PC-3 (cell line): ENCODE measurements at regions of chr9 and their contacts with region 1.

Region 1: DNA sequence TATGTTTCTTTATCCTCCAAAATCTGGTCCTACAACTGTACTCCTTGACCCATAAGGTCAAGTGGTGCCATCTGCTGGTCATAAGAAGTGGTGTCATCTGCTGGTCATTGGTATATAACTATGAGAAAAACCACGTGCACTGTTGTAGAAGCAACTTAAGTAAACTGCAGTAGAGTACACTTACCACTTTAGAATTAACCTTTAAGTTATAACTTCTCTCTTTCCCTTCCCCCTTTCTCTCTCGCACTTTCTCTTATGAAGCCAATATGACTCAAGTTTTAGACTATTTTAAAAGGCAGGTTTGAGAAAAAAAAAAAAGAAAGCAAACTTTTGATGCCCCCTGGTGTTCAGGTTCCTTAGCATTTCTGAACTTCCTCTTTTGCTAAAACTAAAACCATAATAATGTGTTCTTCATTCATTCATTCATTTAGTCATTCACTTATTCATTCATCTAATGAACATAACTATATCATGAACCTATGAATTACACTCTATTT is 12.8 kb upstream of the MTAP start:
- DNase-seq: peak; percentile 88
- ATAC-seq: peak; percentile 89
- H3K4me3 ChIP-seq: peak overlapping the region; percentile 57
- H3K27ac ChIP-seq: peak overlapping the region; percentile 57
- H3K4me1 ChIP-seq: peaks cover 18% of the 10 kb centered on the region
- H3K27me3 ChIP-seq: no peaks in the 10 kb centered on the region
- CTCF ChIP-seq: peak; percentile 86

Region 2: GRCh38 chr9:21326526-21327139 is 463.0 kb before region 1 on chr9:
- CTCF ChIA-PET with region 1: no interaction called
- POLR2A ChIA-PET with region 1: no interaction called
- intact Hi-C with region 1: loop called (anchors 1 kb)
- DNase-seq: peak; percentile 63
- ATAC-seq: peak; percentile 72
- H3K4me3 ChIP-seq: no peak overlapping the region
- H3K27ac ChIP-seq: no peak overlapping the region
- H3K4me1 ChIP-seq: peaks cover 10% of the 10 kb centered on the region
- H3K27me3 ChIP-seq: no peaks in the 10 kb centered on the region
- CTCF ChIP-seq: peak; percentile 76

Region 3: DNA sequence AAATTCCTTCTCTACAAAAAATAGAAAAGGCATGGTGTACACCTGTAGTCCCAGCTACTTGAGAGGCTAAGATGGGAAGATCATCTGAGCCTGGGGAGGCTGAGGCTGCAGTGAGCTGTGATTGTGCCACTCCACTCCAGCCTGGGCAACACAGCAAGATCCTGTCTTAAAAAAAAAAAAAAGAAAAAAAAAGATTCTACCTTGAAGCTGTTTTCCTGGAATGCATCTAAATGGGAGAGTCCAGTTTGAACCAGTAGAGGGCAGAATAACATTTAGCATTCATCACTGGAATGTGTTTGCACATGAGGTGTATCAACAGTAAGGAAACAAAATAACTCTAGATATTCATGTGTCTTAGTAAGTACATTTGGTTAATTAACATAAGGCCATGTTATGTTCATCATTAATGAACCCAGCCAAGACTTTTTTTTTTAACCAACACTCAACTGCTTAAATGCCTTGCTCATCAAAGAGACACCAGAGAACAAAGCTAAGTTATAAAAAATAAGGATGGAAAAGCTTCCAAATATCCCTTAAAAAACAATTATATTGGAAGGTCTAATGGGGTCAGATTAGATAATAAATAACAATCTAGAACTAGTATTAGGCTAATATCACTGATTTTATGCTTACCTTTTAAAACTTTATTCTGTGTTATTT is 323.6 kb before region 1 on chr9:
- CTCF ChIA-PET with region 1: no interaction called
- POLR2A ChIA-PET with region 1: no interaction called
- intact Hi-C with region 1: loop called (anchors 2 kb)
- DNase-seq: peak; percentile 77
- ATAC-seq: peak; percentile 48; the same call in 1 of the 2 replicates
- H3K4me3 ChIP-seq: no peak overlapping the region
- H3K27ac ChIP-seq: no peak overlapping the region
- H3K4me1 ChIP-seq: no peaks in the 10 kb centered on the region
- H3K27me3 ChIP-seq: no peaks in the 10 kb centered on the region
- CTCF ChIP-seq: peak; percentile 79

Region 4: GRCh38 chr9:21585756-21586752 is 203.5 kb before region 1 on chr9:
- CTCF ChIA-PET with region 1: no interaction called
- POLR2A ChIA-PET with region 1: no interaction called
- intact Hi-C with region 1: loop called (anchors 1 kb)
- DNase-seq: peak; percentile 39
- ATAC-seq: peak; percentile 31
- H3K4me3 ChIP-seq: no peak overlapping the region
- H3K27ac ChIP-seq: peak overlapping the region; percentile 39
- H3K4me1 ChIP-seq: peaks cover 46% of the 10 kb centered on the region
- H3K27me3 ChIP-seq: no peaks in the 10 kb centered on the region
- CTCF ChIP-seq: peak; percentile 53

Region 5: DNA sequence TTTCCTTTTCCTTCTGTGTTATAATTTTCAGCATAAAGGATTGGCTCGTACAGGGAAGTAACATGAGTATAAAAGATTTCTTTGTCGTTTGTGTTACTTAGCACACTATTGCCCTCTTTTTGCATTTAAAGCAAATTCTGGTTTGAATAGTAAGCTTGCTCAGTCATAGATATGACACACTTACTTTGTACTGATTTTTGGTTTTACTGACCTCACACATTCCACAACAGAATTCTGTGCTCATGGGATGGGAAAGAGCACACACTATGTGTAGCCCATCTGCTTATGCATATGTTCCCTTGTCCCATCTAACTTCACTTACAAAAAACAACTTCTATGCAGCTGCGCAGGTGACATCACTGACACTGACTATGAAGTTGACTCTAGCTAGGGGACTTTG is 99.0 kb before region 1 on chr9:
- CTCF ChIA-PET with region 1: no interaction called
- POLR2A ChIA-PET with region 1: no interaction called
- intact Hi-C with region 1: no loop called
- DNase-seq: no peak
- ATAC-seq: no peak
- H3K4me3 ChIP-seq: no peak overlapping the region
- H3K27ac ChIP-seq: peak overlapping the region; percentile 1; the same call in 1 of the 2 replicates
- H3K4me1 ChIP-seq: peaks cover 49% of the 10 kb centered on the region
- H3K27me3 ChIP-seq: no peaks in the 10 kb centered on the region
- CTCF ChIP-seq: no peak

Region 6: GRCh38 chr9:21709464-21710058 is 80.0 kb before region 1 on chr9:
- CTCF ChIA-PET with region 1: no interaction called
- POLR2A ChIA-PET with region 1: no interaction called
- intact Hi-C with region 1: loop called (anchors 2 kb)
- DNase-seq: peak; percentile 73
- ATAC-seq: no peak
- H3K4me3 ChIP-seq: no peak overlapping the region
- H3K27ac ChIP-seq: no peak overlapping the region
- H3K4me1 ChIP-seq: peaks cover 11% of the 10 kb centered on the region; the same call in 1 of the 2 replicates
- H3K27me3 ChIP-seq: no peaks in the 10 kb centered on the region
- CTCF ChIP-seq: peak; percentile 84

Region 7: GRCh38 chr9:22693156-22693555 is 903.6 kb after region 1 on chr9:
- CTCF ChIA-PET with region 1: no interaction called
- POLR2A ChIA-PET with region 1: no interaction called
- intact Hi-C with region 1: no loop called
- DNase-seq: peak; percentile 9
- ATAC-seq: no peak
- H3K4me3 ChIP-seq: no peak overlapping the region
- H3K27ac ChIP-seq: no peak overlapping the region
- H3K4me1 ChIP-seq: no peaks in the 10 kb centered on the region
- H3K27me3 ChIP-seq: no peaks in the 10 kb centered on the region
- CTCF ChIP-seq: no peak